HepG2 (cell line): ENCODE measurements at regions of chr4 and their contacts with region 1.

Region 1: GRCh38 chr4:78864405-78865024 is 74.7 kb downstream of the PAQR3 start:
- DNase-seq: peak; percentile 74
- ATAC-seq: 0 out of 3 replicates have a peak, but pooled peaks have one; percentile 31
- H3K4me3 ChIP-seq: no peak overlapping the region
- H3K27ac ChIP-seq: no peak overlapping the region
- H3K4me1 ChIP-seq: peaks cover 27% of the 10 kb centered on the region
- H3K27me3 ChIP-seq: no peaks in the 10 kb centered on the region
- CTCF ChIP-seq: peak; percentile 75
- EP300 ChIP-seq: no peak
- POLR2A ChIP-seq: no peak
- RAD21 ChIP-seq: peak; percentile 61

Region 2: GRCh38 chr4:77959566-77960338 is 904.8 kb before region 1 on chr4:
- CTCF ChIA-PET with region 1: no interaction called
- POLR2A ChIA-PET with region 1: no interaction called
- in situ Hi-C with region 1: loop called (anchors 25 kb)
- intact Hi-C with region 1: loop called (anchors 10 kb)
- DNase-seq: peak; percentile 63
- ATAC-seq: peak; percentile 57; the same call in 2 of the 3 replicates
- H3K4me3 ChIP-seq: no peak overlapping the region
- H3K27ac ChIP-seq: no peak overlapping the region
- H3K4me1 ChIP-seq: no peaks in the 10 kb centered on the region
- H3K27me3 ChIP-seq: no peaks in the 10 kb centered on the region
- CTCF ChIP-seq: peak; percentile 69
- EP300 ChIP-seq: no peak
- POLR2A ChIP-seq: no peak
- RAD21 ChIP-seq: peak; percentile 56

Region 3: GRCh38 chr4:78517050-78517652 is 347.4 kb before region 1 on chr4:
- CTCF ChIA-PET with region 1: no interaction called
- POLR2A ChIA-PET with region 1: no interaction called
- in situ Hi-C with region 1: no loop called
- intact Hi-C with region 1: loop called (anchors 1 kb)
- DNase-seq: peak; percentile 11
- ATAC-seq: no peak
- H3K4me3 ChIP-seq: no peak overlapping the region
- H3K27ac ChIP-seq: no peak overlapping the region
- H3K4me1 ChIP-seq: peaks cover 23% of the 10 kb centered on the region
- H3K27me3 ChIP-seq: no peaks in the 10 kb centered on the region
- CTCF ChIP-seq: peak; percentile 65
- EP300 ChIP-seq: no peak
- POLR2A ChIP-seq: no peak
- RAD21 ChIP-seq: peak; percentile 34; the same call in 1 of the 2 replicates

Region 4: GRCh38 chr4:78612398-78613178 is 251.9 kb before region 1 on chr4:
- CTCF ChIA-PET with region 1: interaction called, 14 read pairs
- POLR2A ChIA-PET with region 1: no interaction called
- in situ Hi-C with region 1: loop called (anchors 5 kb)
- intact Hi-C with region 1: loop called (anchors 1 kb)
- DNase-seq: peak; percentile 21
- ATAC-seq: peak; percentile 54; the same call in 2 of the 3 replicates
- H3K4me3 ChIP-seq: no peak overlapping the region
- H3K27ac ChIP-seq: no peak overlapping the region
- H3K4me1 ChIP-seq: peaks cover 9% of the 10 kb centered on the region; the same call in 1 of the 2 replicates
- H3K27me3 ChIP-seq: no peaks in the 10 kb centered on the region
- CTCF ChIP-seq: peak; percentile 46; the same call in 1 of the 2 replicates
- EP300 ChIP-seq: no peak
- POLR2A ChIP-seq: no peak
- RAD21 ChIP-seq: peak; percentile 26; the same call in 1 of the 2 replicates

Region 5: DNA sequence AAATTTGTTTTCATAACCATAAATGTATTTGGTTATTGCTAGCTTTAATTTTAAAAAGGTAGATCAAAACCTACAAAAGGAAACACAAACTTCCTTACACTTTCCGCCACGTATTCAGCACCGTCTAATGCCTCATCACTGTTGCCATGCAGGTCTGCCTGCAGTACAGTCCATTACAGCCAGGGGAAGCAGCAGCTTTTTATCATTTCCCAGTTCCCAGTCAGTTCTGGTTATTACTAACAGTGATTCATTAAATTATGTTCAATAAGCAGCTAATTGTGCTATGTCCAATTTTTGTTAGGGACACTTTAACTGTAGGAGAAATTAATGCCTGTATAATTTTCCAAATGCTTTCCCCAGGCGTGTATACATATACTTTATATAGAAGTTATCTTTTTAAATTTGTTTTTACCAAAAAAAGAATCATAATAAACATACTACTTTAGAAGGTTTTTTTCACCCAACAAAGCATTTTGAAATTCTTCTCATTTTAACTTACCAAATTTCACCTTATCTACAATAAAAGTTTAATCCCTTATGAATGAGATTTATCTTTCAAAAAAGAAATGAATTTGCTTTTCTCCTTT is 219.7 kb before region 1 on chr4:
- CTCF ChIA-PET with region 1: interaction called, 15 read pairs
- POLR2A ChIA-PET with region 1: no interaction called
- in situ Hi-C with region 1: no loop called
- intact Hi-C with region 1: loop called (anchors 1 kb)
- DNase-seq: peak; percentile 51
- ATAC-seq: peak; percentile 98
- H3K4me3 ChIP-seq: no peak overlapping the region
- H3K27ac ChIP-seq: no peak overlapping the region
- H3K4me1 ChIP-seq: peaks cover 9% of the 10 kb centered on the region
- H3K27me3 ChIP-seq: no peaks in the 10 kb centered on the region
- CTCF ChIP-seq: peak; percentile 69
- EP300 ChIP-seq: no peak
- POLR2A ChIP-seq: no peak
- RAD21 ChIP-seq: peak; percentile 41; the same call in 1 of the 2 replicates

Region 6: DNA sequence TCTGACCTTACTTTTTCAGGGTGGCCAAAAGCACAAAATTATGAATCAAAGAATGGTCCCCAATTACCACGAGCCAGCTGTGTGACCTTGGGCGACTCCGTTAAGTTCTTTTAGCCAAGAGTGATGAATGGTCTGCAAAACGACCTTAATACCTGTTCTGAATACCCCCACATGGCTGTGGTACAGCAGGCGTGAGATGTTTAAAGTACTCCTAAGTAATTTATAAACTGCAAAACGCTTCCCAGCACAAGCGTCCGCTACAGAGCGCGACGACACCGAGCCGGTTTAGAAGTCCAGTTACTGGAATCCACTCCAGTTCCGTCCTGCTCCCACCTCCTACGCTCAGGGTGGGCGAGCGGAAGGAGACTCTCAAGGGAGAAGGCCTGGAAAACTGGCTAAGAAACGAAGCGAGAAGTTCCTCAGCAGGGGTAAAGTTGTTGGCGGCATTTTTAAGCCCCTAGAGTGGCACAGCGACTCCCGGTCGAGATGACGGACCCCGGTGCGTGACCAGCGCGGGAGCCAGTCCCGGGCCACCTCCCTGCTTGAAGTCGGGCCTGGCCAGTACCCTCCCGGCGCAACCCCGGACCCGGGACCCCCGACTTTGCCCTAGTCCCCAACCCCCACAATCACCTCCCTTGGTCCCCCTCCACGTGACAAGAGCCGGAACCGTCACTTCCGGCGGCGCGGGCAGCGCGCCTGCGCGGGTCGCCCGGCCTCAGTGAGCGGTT is 89.0 kb before region 1 on chr4:
- CTCF ChIA-PET with region 1: no interaction called
- POLR2A ChIA-PET with region 1: interaction called, 13 read pairs
- in situ Hi-C with region 1: no loop called
- intact Hi-C with region 1: loop called (anchors 1 kb)
- DNase-seq: peak; percentile 71
- ATAC-seq: peak; percentile 73
- H3K4me3 ChIP-seq: peak overlapping the region; percentile 83 to 95 (median 95)
- H3K27ac ChIP-seq: peak overlapping the region; percentile 100
- H3K4me1 ChIP-seq: peaks cover 34% of the 10 kb centered on the region
- H3K27me3 ChIP-seq: no peaks in the 10 kb centered on the region; a peak in 1 of 5 replicates
- CTCF ChIP-seq: no peak
- EP300 ChIP-seq: 0 out of 4 replicates have a peak, but pooled peaks of 1 of the 2 experiments have one; percentile 24
- POLR2A ChIP-seq: peak; percentile 72 to 80
- RAD21 ChIP-seq: no peak

Region 7: GRCh38 chr4:78885598-78885997 is 21.1 kb after region 1 on chr4:
- CTCF ChIA-PET with region 1: no interaction called
- POLR2A ChIA-PET with region 1: no interaction called
- in situ Hi-C with region 1: no loop called
- intact Hi-C with region 1: no loop called
- DNase-seq: no peak
- ATAC-seq: no peak
- H3K4me3 ChIP-seq: no peak overlapping the region
- H3K27ac ChIP-seq: no peak overlapping the region
- H3K4me1 ChIP-seq: no peaks in the 10 kb centered on the region
- H3K27me3 ChIP-seq: no peaks in the 10 kb centered on the region
- CTCF ChIP-seq: no peak
- EP300 ChIP-seq: no peak
- POLR2A ChIP-seq: no peak
- RAD21 ChIP-seq: no peak

Region 8: GRCh38 chr4:78937837-78938236 is 73.3 kb after region 1 on chr4:
- CTCF ChIA-PET with region 1: no interaction called
- POLR2A ChIA-PET with region 1: no interaction called
- in situ Hi-C with region 1: no loop called
- intact Hi-C with region 1: no loop called
- DNase-seq: peak; percentile 9
- ATAC-seq: no peak
- H3K4me3 ChIP-seq: no peak overlapping the region
- H3K27ac ChIP-seq: no peak overlapping the region
- H3K4me1 ChIP-seq: peaks cover 53% of the 10 kb centered on the region
- H3K27me3 ChIP-seq: peaks cover 0 to 14% of the 10 kb centered on the region in 2 experiments; a peak in 2 of 5 replicates
- CTCF ChIP-seq: no peak
- EP300 ChIP-seq: no peak
- POLR2A ChIP-seq: no peak
- RAD21 ChIP-seq: no peak